ENCODE measurements at regions of chr1 and their contacts with region 1.

Region 1: DNA sequence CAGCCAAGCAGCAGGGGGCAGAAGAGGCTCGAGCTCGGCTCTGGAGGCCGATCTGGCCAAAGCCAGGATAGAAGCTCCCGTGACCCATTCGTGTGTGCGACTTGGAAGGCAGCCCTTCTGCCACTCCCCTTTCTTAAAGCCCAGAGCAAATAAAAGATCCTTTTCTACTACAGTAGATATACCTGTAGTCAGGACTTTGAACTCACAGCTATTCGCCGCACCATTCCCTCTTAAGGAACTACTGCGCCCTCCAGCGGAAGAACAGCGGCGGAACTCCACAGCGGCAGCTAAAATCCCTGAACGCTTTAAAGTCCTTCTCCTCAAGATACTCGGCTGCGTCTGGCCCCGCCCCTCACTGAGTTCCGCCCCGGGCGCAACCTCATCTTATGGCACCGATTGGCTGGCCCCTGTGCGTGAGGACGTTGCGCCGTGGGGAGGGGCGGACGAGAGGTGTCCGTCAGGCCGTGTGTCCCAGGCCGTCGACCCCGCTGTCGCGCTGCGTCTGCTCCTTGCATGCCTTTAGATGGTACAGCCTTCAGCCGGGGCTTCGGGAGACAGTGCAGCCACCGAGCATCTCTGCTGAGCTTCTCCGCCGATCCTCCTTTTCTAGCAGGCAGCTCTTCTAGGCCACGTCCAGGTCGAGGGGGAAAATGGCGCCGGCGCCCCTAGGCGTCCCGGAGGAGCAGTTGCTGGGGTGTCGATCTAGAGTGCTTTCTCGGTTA is at the start of gene LRIG2:
- DNase-seq: peak; percentile 91
- ATAC-seq: peak; percentile 98
- H3K4me3 ChIP-seq: peak within 1 kb of the TSS; percentile 91
- H3K27ac ChIP-seq: peak within 1 kb of the TSS; percentile 85
- H3K4me1 ChIP-seq: peaks cover 4% of the 10 kb centered on the region; the same call in 1 of the 2 replicates
- H3K27me3 ChIP-seq: no peaks in the 10 kb centered on the region
- CTCF ChIP-seq: peak; percentile 41 to 75 (median 65)
- EP300 ChIP-seq: 0 out of 4 replicates have a peak, but pooled peaks of 1 of the 2 experiments have one; percentile 26
- POLR2A ChIP-seq: peak; percentile 99
- RAD21 ChIP-seq: peak; percentile 56
- polyA plus RNA-seq, gene LRIG2: 0.77 to 1.3 TPM

Region 2: DNA sequence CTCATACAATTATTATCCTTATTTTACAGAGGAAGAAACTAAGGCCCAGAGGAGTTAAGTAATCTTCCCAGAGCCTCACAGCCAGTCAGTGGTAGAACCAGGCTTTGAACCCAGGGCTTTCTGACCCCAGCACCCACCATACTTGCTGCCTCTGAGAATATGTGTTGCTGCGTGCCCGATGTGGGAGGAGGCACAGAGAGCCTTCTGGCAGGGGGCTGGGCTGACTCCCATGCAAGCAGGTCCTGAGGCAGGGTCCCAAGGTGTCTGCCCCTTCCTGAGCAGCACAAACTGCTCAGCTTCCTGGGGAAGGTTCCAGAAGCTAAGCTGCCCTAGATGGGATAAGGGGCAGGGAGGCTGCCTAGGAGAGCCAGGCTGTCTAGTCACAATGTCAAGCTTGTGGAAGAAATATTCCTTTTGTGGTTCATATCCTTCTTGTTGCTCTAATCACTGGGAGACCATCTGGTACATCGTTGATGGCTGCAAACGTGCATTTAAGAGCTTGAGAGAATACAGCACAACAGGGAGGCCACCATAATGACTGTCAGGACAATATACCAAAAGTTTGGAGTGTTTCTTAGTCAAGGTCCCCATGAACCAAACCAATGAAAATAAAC is 184.4 kb before region 1 on chr1:
- CTCF ChIA-PET with region 1: interaction called, 100 read pairs
- POLR2A ChIA-PET with region 1: no interaction called
- RAD21 ChIA-PET with region 1: no interaction called
- SMC1A ChIA-PET with region 1: interaction called, 12 read pairs
- in situ Hi-C with region 1: no loop called
- intact Hi-C with region 1: no loop called
- DNase-seq: no peak
- ATAC-seq: no peak
- H3K4me3 ChIP-seq: no peak overlapping the region
- H3K27ac ChIP-seq: no peak overlapping the region
- H3K4me1 ChIP-seq: no peaks in the 10 kb centered on the region
- H3K27me3 ChIP-seq: no peaks in the 10 kb centered on the region
- CTCF ChIP-seq: no peak
- EP300 ChIP-seq: no peak
- POLR2A ChIP-seq: no peak
- RAD21 ChIP-seq: no peak

Region 3: GRCh38 chr1:112955781-112956543 is 117.0 kb before region 1 on chr1 and contains the start of gene SLC16A1:
- CTCF ChIA-PET with region 1: interaction called, 13 read pairs
- POLR2A ChIA-PET with region 1: interaction called, 8 read pairs
- RAD21 ChIA-PET with region 1: interaction called, 18 read pairs
- SMC1A ChIA-PET with region 1: interaction called, 8 read pairs
- in situ Hi-C with region 1: no loop called
- intact Hi-C with region 1: no loop called
- DNase-seq: peak; percentile 66
- ATAC-seq: peak; percentile 81
- H3K4me3 ChIP-seq: peak within 1 kb of the TSS; percentile 82
- H3K27ac ChIP-seq: peak within 1 kb of the TSS; percentile 93
- H3K4me1 ChIP-seq: no peaks in the 10 kb centered on the region
- H3K27me3 ChIP-seq: no peaks in the 10 kb centered on the region
- CTCF ChIP-seq: peak; percentile 4 to 43 (median 22); a peak in 3 of 6 replicates
- EP300 ChIP-seq: no peak
- POLR2A ChIP-seq: peak; percentile 100
- RAD21 ChIP-seq: peak; percentile 24; the same call in 1 of the 2 replicates
- polyA plus RNA-seq, gene SLC16A1: 40.1 to 45.2 TPM

Region 4: GRCh38 chr1:113007706-113008364 is 65.1 kb before region 1 on chr1:
- CTCF ChIA-PET with region 1: no interaction called
- POLR2A ChIA-PET with region 1: no interaction called
- RAD21 ChIA-PET with region 1: no interaction called
- SMC1A ChIA-PET with region 1: no interaction called
- in situ Hi-C with region 1: no loop called
- intact Hi-C with region 1: no loop called
- DNase-seq: no peak
- ATAC-seq: no peak
- H3K4me3 ChIP-seq: no peak overlapping the region
- H3K27ac ChIP-seq: no peak overlapping the region
- H3K4me1 ChIP-seq: no peaks in the 10 kb centered on the region
- H3K27me3 ChIP-seq: no peaks in the 10 kb centered on the region
- CTCF ChIP-seq: no peak
- EP300 ChIP-seq: no peak
- POLR2A ChIP-seq: no peak
- RAD21 ChIP-seq: no peak

Region 5: DNA sequence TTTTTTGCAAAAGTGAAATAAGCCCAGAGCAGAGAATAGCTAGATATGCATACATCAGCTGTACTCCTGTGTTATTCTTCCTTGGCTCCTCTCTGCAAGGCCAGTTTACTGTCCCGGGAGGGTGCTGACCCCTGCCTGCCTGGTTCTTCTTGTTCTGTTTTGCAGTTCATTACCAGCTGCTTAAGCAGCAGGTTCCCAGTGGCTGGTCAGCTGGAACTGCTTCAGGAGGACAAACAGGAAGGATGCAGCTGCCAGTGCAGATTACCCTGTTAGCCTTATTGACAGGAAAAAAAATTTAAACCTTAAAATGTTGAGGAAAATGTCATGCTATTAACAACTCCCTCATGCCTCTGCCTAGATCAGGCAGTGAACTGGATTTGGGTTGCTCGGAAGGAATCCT is 15.9 kb before region 1 on chr1:
- CTCF ChIA-PET with region 1: interaction called, 52 read pairs
- POLR2A ChIA-PET with region 1: no interaction called
- RAD21 ChIA-PET with region 1: interaction called, 12 read pairs
- SMC1A ChIA-PET with region 1: interaction called, 9 read pairs
- in situ Hi-C with region 1: no loop called
- intact Hi-C with region 1: no loop called
- DNase-seq: no peak
- ATAC-seq: no peak; the same call in none of the 3 replicates
- H3K4me3 ChIP-seq: no peak overlapping the region
- H3K27ac ChIP-seq: no peak overlapping the region
- H3K4me1 ChIP-seq: no peaks in the 10 kb centered on the region
- H3K27me3 ChIP-seq: no peaks in the 10 kb centered on the region
- CTCF ChIP-seq: no peak
- EP300 ChIP-seq: no peak
- POLR2A ChIP-seq: no peak
- RAD21 ChIP-seq: no peak

Region 6: GRCh38 chr1:113123737-113124136 is 50.8 kb after region 1 on chr1:
- CTCF ChIA-PET with region 1: interaction called, 10 read pairs
- POLR2A ChIA-PET with region 1: no interaction called
- RAD21 ChIA-PET with region 1: no interaction called
- SMC1A ChIA-PET with region 1: no interaction called
- in situ Hi-C with region 1: no loop called
- intact Hi-C with region 1: no loop called
- DNase-seq: no peak
- ATAC-seq: no peak
- H3K4me3 ChIP-seq: no peak overlapping the region
- H3K27ac ChIP-seq: no peak overlapping the region
- H3K4me1 ChIP-seq: no peaks in the 10 kb centered on the region
- H3K27me3 ChIP-seq: no peaks in the 10 kb centered on the region
- CTCF ChIP-seq: no peak
- EP300 ChIP-seq: no peak
- POLR2A ChIP-seq: no peak
- RAD21 ChIP-seq: no peak

Region 7: DNA sequence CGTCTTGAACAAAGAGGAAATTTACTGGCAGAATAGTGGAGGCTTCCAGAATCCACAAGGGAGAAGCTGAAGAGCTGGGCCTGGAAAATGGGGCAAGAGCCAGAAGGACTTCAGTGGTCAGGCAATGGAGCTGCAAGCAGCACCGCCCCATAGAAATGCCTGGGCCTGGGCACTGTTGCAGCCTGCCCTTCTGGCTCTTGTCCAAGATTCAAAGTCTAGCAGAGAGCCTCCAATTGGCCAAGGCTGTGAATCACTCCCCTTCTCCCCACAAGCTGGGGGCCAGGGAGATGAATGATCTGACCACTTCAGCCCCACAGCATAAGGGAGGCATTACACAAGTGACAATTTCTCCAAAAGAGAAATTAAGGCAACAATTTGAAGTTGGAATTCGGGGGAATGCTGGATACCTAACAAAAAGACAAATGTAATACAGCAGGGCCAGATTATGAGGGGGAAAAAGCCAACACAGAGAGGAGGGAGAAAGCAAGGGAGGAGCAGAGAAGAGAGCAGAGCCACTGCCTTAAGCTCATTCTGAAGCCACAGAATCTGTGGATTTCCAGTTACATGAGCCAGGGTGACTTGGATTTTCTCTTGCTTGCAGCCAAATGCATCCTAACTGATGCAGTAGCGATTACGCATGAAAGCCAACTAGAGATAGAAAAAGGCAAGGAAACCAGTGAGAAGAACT is 80.3 kb after region 1 on chr1:
- CTCF ChIA-PET with region 1: no interaction called
- POLR2A ChIA-PET with region 1: no interaction called
- RAD21 ChIA-PET with region 1: no interaction called
- SMC1A ChIA-PET with region 1: no interaction called
- in situ Hi-C with region 1: no loop called
- intact Hi-C with region 1: no loop called
- DNase-seq: no peak
- ATAC-seq: no peak
- H3K4me3 ChIP-seq: no peak overlapping the region
- H3K27ac ChIP-seq: no peak overlapping the region
- H3K4me1 ChIP-seq: no peaks in the 10 kb centered on the region
- H3K27me3 ChIP-seq: no peaks in the 10 kb centered on the region
- CTCF ChIP-seq: no peak
- EP300 ChIP-seq: no peak
- POLR2A ChIP-seq: no peak
- RAD21 ChIP-seq: no peak

Region 8: GRCh38 chr1:113677250-113678158 is 604.6 kb after region 1 on chr1:
- CTCF ChIA-PET with region 1: interaction called, 9 read pairs
- POLR2A ChIA-PET with region 1: interaction called, 3 read pairs
- RAD21 ChIA-PET with region 1: interaction called, 4 read pairs
- SMC1A ChIA-PET with region 1: interaction called, 6 read pairs
- in situ Hi-C with region 1: no loop called
- intact Hi-C with region 1: loop called (anchors 2 kb)
- DNase-seq: no peak
- ATAC-seq: peak; percentile 74; the same call in 2 of the 3 replicates
- H3K4me3 ChIP-seq: no peak overlapping the region
- H3K27ac ChIP-seq: no peak overlapping the region
- H3K4me1 ChIP-seq: no peaks in the 10 kb centered on the region
- H3K27me3 ChIP-seq: no peaks in the 10 kb centered on the region
- CTCF ChIP-seq: peak; percentile 36 to 52 (median 42); a peak in 5 of 6 replicates
- EP300 ChIP-seq: no peak
- POLR2A ChIP-seq: no peak
- RAD21 ChIP-seq: peak; percentile 81